ENCODE measurements at regions of chr14 and their contacts with region 1.

Region 1: DNA sequence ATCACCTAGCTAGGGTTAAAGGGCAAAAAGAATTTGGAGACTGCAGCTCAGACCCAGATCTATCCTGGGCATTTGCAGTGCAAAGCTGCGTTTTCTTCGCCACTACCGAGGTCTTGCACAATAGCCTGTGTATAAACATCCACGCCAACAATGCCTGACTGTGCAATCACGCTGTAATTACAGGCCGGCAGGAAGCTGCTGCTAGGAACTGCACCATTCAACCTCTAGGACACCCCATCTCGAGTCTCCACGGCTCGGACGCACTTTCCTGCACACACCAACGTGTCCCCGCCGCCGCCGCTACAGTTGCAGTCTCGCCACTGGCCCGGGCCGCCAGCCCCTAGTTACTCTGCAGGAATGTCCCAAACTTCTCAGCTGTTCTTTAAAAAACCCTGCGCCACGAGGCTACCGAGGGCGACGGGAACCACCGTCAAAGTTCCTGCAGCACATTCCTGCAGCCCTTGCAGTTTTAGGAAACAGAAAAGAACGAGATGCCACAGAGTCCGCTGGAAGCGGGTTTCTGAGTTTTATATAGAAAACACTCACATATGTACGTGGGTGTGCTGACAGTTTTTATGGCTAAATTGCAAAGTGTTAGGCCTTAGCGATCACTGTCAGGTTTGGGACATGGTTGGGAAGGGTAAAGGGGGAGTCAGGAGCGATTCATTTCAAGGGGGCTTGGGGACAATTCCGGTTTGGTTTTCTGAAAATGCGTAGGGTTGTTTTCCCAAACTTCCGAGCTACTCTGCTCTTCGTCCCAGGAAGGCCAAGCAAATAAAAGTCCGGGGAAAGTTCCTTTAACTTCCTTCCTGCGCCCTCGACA is 65.5 kb upstream of the PTGR2 start:
- DNase-seq: peak; percentile 89
- ATAC-seq: peak; percentile 78

Region 2: DNA sequence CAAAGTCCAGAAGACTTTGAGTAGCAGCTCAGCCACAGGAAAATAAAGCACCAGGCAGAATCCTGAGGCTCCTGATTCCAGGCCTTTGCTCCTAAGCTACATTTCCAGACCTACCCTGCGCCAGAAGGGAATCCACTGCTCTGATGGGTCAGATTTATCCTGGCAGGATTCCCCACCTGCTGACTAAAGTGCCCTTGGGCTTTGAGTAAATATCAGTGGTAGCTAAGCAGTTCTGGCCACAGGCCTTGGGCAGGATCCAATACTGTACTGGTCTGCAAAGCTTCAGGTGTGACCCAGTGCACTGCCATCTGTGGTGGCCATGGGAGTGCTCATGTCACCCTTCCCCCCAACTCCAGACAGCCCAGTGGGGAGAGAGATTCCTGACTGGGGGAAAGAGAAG is 259.5 kb before region 1 on chr14:
- intact Hi-C with region 1: no loop called
- DNase-seq: no peak
- ATAC-seq: peak; percentile 88

Region 3: GRCh38 chr14:73728717-73729330 is 57.3 kb before region 1 on chr14:
- intact Hi-C with region 1: loop called (anchors 2 kb)
- DNase-seq: peak; percentile 88
- ATAC-seq: peak; percentile 73

Region 4: GRCh38 chr14:73741386-73741875 is 44.7 kb before region 1 on chr14:
- intact Hi-C with region 1: loop called (anchors 5 kb)
- DNase-seq: peak; percentile 87
- ATAC-seq: peak; percentile 54

Region 5: DNA sequence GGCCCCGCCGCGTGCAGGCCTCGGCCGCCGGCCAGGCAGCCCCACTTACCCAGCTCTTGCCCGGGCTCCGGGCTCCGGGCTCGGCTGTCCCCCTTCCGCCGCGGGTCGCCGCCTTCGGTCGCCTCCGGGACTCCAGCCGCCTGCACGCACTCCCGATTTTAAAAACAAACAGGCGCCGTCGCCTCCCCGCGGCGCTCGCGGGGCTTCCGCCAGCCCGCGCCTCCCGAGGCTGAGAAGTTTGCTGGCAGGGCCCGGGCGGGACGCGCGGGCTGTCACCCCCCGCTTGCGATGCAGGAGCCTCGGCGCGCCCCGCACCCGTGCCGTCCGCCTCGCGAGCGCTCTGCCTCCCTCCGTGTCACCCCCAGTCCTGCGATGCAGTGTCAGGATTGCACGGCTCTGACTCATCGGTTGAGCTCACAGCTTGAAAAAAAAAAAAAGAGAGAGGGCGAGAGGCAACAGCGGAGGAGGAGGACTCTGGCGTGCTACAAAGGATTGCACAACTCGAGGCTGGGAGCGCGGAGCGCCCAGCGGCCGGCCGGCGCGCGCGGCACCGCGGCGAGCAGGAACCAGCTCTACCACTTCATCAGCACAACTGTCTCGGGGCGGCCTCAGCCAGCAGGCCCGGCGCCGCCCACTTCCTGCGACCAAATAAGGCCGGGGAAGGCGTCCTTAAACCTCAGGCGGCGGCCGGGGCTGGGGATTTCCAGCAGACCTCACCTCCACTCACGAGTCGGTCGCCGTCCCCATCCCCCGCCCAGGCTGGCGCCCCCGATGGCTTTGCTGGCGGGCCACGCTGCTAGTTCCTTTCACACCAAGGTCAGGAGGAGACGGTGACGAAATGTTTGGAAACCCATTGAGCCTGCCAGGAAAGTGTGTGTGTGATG is 26.1 kb before region 1 on chr14:
- intact Hi-C with region 1: loop called (anchors 2 kb)
- DNase-seq: peak; percentile 99
- ATAC-seq: peak; percentile 87

Region 6: GRCh38 chr14:73886449-73887317 is 100.6 kb after region 1 on chr14 and contains the start of gene ZNF410:
- intact Hi-C with region 1: loop called (anchors 5 kb)
- DNase-seq: peak; percentile 98
- ATAC-seq: peak; percentile 100
- total RNA-seq, gene ZNF410: 16.0 TPM